ENCODE measurements at regions of chr4 and their contacts with region 1.

Region 1: DNA sequence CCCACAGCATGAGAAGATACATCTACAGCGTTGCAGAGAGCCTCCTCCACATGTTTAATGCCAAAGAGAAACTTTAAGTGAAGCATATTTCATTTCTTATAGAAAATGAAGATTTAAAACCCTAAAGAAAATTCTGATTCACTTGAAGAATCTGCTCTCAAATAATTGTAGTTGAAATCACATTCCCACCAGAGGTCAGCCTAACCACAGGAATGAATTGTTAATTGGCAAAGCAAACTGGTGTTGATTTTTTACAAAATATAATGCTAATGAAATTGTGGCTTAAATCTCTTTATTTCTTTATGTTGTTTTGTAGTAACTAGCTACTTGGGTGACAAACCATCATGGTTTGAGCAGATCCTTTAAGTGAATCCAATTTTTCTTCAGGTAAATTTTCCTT is 31.1 kb upstream of the WDR17 start:
- DNase-seq: peak; percentile 35
- H3K4me3 Mint-ChIP-seq: no peak overlapping the region
- H3K27ac Mint-ChIP-seq: no peak overlapping the region
- H3K4me1 Mint-ChIP-seq: no peaks in the 10 kb centered on the region
- H3K27me3 Mint-ChIP-seq: no peaks in the 10 kb centered on the region
- CTCF ChIP-seq: no peak

Region 2: GRCh38 chr4:176077561-176077960 is 43.1 kb after region 1 on chr4:
- CTCF ChIA-PET with region 1: no interaction called
- intact Hi-C with region 1: no loop called
- DNase-seq: no peak
- H3K4me3 Mint-ChIP-seq: no peak overlapping the region
- H3K27ac Mint-ChIP-seq: no peak overlapping the region
- H3K4me1 Mint-ChIP-seq: no peaks in the 10 kb centered on the region
- H3K27me3 Mint-ChIP-seq: no peaks in the 10 kb centered on the region
- CTCF ChIP-seq: no peak

Region 3: GRCh38 chr4:176123710-176124407 is 89.4 kb after region 1 on chr4:
- CTCF ChIA-PET with region 1: no interaction called
- intact Hi-C with region 1: loop called (anchors 5 kb)
- DNase-seq: peak; percentile 9
- H3K4me3 Mint-ChIP-seq: no peak overlapping the region
- H3K27ac Mint-ChIP-seq: no peak overlapping the region
- H3K4me1 Mint-ChIP-seq: no peaks in the 10 kb centered on the region
- H3K27me3 Mint-ChIP-seq: no peaks in the 10 kb centered on the region
- CTCF ChIP-seq: peak; percentile 36

Region 4: DNA sequence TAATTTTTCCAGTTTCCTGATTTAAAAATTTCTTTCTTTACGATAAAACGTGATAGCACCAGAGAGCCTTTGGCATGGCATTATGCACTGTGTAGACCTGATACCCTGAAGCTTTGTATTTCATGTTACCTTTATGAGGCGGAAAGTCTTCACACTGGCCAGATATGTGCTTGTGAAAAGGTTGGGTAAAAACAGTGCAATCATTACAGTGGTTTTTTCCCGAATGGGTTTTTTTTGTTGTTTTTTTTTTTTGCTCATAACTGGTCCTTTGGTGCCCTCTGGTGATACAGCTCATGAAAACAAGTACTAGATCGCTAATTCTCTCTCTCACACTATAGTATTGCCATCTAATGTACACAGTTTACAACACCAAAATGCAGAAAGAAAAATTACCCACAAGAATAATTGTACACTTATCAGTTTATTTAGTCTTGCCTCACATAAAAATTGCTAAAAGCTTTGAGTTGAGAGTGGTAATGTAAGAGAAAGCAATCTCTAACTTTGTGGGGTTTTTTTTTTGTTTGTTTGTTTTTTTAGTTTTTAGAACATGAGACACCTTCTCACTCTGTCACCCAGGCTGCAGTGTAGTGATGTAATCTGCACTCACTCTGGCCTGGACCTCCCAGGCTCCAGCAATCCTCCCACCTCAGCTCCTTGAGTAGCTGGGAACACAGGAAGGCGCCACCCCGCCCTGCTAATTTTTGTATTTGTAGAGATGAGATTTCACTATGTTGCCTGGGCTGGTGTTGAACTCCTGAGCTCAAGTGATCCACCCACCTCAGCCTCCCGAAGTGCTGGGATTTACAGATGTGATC is 306.6 kb after region 1 on chr4:
- CTCF ChIA-PET with region 1: no interaction called
- intact Hi-C with region 1: loop called (anchors 1 kb)
- DNase-seq: peak; percentile 4
- H3K4me3 Mint-ChIP-seq: no peak overlapping the region
- H3K27ac Mint-ChIP-seq: no peak overlapping the region
- H3K4me1 Mint-ChIP-seq: no peaks in the 10 kb centered on the region
- H3K27me3 Mint-ChIP-seq: no peaks in the 10 kb centered on the region
- CTCF ChIP-seq: no peak